ENCODE measurements at regions of chr3 and their contacts with region 1.

Region 1: GRCh38 chr3:134473868-134474546 is 11.8 kb downstream of the ANAPC13 start:
- DNase-seq: peak in 5 of 6 donors; percentile 52 to 78 (median 63)
- ATAC-seq: peak; percentile 64 to 91 (median 82)
- H3K4me3 ChIP-seq: no peak overlapping the region
- H3K27ac ChIP-seq: no peak overlapping the region
- H3K4me1 ChIP-seq: peaks cover 0 to 3% (median 0%) of the 10 kb centered on the region in 3 donors
- H3K27me3 ChIP-seq: no peaks in the 10 kb centered on the region
- CTCF ChIP-seq: peak; percentile 65 to 78 (median 68)

Region 2: GRCh38 chr3:134308350-134308891 is 165.6 kb before region 1 on chr3:
- intact Hi-C with region 1: loop called in 2 of 3 experiments (anchors 5 kb)
- DNase-seq: peak; percentile 63 to 90 (median 80)
- ATAC-seq: peak; percentile 36 to 84 (median 69)
- H3K4me3 ChIP-seq: no peak overlapping the region
- H3K27ac ChIP-seq: peak overlapping the region; percentile 17 to 54 (median 42)
- H3K4me1 ChIP-seq: peaks cover 0 to 8% (median 8%) of the 10 kb centered on the region in 3 donors
- H3K27me3 ChIP-seq: no peaks in the 10 kb centered on the region
- CTCF ChIP-seq: peak; percentile 88 to 98 (median 96)

Region 3: GRCh38 chr3:134918441-134918840 is 444.4 kb after region 1 on chr3:
- intact Hi-C with region 1: no loop called
- DNase-seq: no peak
- ATAC-seq: no peak
- H3K4me3 ChIP-seq: no peak overlapping the region
- H3K27ac ChIP-seq: no peak overlapping the region
- H3K4me1 ChIP-seq: no peaks in the 10 kb centered on the region
- H3K27me3 ChIP-seq: no peaks in the 10 kb centered on the region
- CTCF ChIP-seq: no peak